Heart left ventricle (tissue), 16 donors: ENCODE measurements at regions of chr6 and their contacts with region 1.

Region 1: GRCh38 chr6:122063076-122063475 is 336.4 kb upstream of the HSF2 start:
- DNase-seq: no peak
- ATAC-seq: no peak
- H3K4me3 ChIP-seq: no peak overlapping the region
- H3K27ac ChIP-seq: no peak overlapping the region
- H3K4me1 ChIP-seq: peaks cover 0 to 3% (median 0%) of the 10 kb centered on the region in 12 donors
- H3K27me3 ChIP-seq: no peaks in the 10 kb centered on the region
- CTCF ChIP-seq: no peak
- POLR2A ChIP-seq: no peak

Region 2: GRCh38 chr6:121932076-121932991 is 130.7 kb before region 1 on chr6:
- intact Hi-C with region 1: no loop called
- DNase-seq: peak in 4 of 5 donors; percentile 46 to 61 (median 50)
- ATAC-seq: peak; percentile 86 to 95 (median 89)
- H3K4me3 ChIP-seq: peak overlapping the region in 3 of 12 donors; percentile 3 to 18 (median 11)
- H3K27ac ChIP-seq: peak overlapping the region in 5 of 12 donors; percentile 10 to 63 (median 33)
- H3K4me1 ChIP-seq: peaks cover 0 to 17% (median 6%) of the 10 kb centered on the region in 12 donors
- H3K27me3 ChIP-seq: no peaks in the 10 kb centered on the region
- CTCF ChIP-seq: no peak
- POLR2A ChIP-seq: no peak

Region 3: DNA sequence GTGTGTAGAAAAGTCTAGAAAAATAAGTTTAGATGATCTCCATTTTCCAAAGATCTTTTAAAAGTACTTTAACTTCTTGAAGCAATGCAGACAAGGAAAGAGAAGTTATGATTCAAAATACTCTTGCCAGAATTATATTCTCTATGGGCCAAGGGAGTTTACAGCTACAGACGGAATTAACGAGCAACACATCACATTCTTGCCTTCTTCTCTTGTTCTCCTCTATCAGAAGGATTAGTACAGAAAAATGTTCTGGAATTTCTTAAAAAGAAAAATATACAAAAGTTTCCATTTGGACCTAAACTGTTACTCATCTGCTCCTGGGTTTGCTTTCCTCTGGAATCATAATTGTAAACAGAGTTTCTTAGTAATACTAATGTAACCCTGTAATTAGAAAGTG is 51.6 kb after region 1 on chr6:
- intact Hi-C with region 1: loop called in 1 of 10 experiments (anchors 5 kb)
- DNase-seq: no peak
- ATAC-seq: peak in 1 of 4 donors; percentile 40
- H3K4me3 ChIP-seq: no peak overlapping the region
- H3K27ac ChIP-seq: peak overlapping the region in 3 of 12 donors; percentile 6 to 24 (median 7)
- H3K4me1 ChIP-seq: peaks cover 0 to 24% (median 1%) of the 10 kb centered on the region in 12 donors
- H3K27me3 ChIP-seq: no peaks in the 10 kb centered on the region
- CTCF ChIP-seq: no peak
- POLR2A ChIP-seq: no peak

Region 4: DNA sequence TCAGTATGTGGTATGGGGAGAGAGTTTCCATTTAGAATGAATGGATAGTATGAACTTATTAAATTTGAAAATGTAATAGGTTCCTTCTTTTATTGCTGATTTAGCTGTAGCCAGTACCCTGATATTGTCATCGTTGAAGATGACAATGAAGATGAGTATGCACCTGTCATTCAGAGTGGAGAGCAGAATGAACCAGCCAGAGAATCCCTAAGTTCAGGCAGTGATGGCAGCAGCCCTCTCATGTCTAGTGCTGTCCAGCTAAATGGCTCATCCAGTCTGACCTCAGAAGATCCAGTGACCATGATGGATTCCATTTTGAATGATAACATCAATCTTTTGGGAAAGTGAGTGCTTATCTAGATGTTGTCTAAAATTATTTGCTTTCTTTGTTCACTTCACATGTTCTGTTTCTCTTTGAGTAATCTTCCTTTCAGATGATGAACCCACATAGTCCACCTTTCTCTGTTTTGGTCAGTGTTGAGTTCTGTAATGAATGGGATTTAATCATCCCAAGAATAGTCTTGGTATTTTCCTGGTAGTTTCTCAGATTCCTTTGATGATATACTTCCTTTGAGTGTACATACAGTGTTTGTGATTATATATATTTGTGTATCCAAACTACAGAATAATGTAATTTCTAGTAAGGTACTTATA is 359.7 kb after region 1 on chr6:
- intact Hi-C with region 1: no loop called
- DNase-seq: no peak
- ATAC-seq: no peak
- H3K4me3 ChIP-seq: no peak overlapping the region
- H3K27ac ChIP-seq: no peak overlapping the region
- H3K4me1 ChIP-seq: peaks cover 0 to 2% (median 0%) of the 10 kb centered on the region in 12 donors
- H3K27me3 ChIP-seq: no peaks in the 10 kb centered on the region
- CTCF ChIP-seq: no peak
- POLR2A ChIP-seq: no peak